ENCODE measurements at regions of chr4 and their contacts with region 1.

Region 1: GRCh38 chr4:47704693-47705325 is 133.1 kb downstream of the CORIN start:
- DNase-seq: peak; percentile 63 to 67
- H3K4me3 ChIP-seq: no peak overlapping the region
- H3K4me3 Mint-ChIP-seq: no peak overlapping the region
- H3K27ac Mint-ChIP-seq: no peak overlapping the region
- H3K4me1 ChIP-seq: no peaks in the 10 kb centered on the region
- H3K4me1 Mint-ChIP-seq: no peaks in the 10 kb centered on the region
- H3K27me3 ChIP-seq: no peaks in the 10 kb centered on the region
- H3K27me3 Mint-ChIP-seq: no peaks in the 10 kb centered on the region
- CTCF ChIP-seq: peak; percentile 49 to 73

Region 2: GRCh38 chr4:47686294-47686872 is 18.4 kb before region 1 on chr4:
- CTCF ChIA-PET with region 1: no interaction called
- POLR2A ChIA-PET with region 1: no interaction called
- intact Hi-C with region 1: loop called (anchors 2 kb)
- DNase-seq: peak; percentile 54 to 70
- H3K4me3 ChIP-seq: no peak overlapping the region
- H3K4me3 Mint-ChIP-seq: no peak overlapping the region
- H3K27ac Mint-ChIP-seq: no peak overlapping the region
- H3K4me1 ChIP-seq: no peaks in the 10 kb centered on the region
- H3K4me1 Mint-ChIP-seq: no peaks in the 10 kb centered on the region
- H3K27me3 ChIP-seq: no peaks in the 10 kb centered on the region
- H3K27me3 Mint-ChIP-seq: peaks cover 8% of the 10 kb centered on the region
- CTCF ChIP-seq: peak; percentile 68 to 74

Measured in Caco-2 (cell line).